Heart left ventricle (tissue), 16 donors: ENCODE measurements at regions of chr1 and their contacts with region 1.

Region 1: DNA sequence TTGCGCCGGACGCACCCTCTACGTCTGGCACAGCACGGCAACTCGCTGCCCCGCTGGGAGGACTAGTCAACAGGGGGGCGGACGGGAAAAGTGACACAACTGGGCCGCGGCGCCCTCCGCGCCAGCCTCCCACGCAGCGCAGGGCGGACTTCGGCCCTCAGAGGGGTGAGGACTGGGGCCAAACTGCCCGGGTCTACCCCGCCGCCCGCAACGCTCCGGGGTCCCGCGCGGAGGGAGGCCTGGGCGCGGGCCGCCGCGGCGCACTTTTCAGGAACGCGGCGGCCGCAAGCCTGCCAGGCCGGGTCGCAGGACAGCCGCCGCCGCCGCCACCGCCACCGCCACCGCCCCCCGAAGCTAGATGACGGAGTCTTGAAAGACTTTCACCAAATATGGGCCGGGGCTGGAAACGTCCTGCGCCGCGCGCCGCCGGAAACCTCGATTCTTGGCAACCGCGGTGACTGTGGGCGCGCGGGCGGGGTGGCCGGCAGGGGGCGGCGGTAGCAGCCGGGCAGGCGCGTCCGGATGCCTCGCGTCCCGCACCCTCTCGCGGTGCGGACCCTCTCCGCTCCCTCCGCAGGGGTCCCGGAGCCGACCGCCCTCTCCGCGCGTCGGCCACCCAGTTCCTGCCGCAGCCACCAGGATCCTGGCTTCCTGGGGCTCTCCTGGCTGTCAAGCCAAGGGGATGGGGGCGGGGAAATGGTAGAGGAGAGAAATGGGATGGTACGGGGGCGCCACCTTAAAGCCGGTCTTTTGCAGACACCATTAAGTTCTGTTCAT is 3.7 kb upstream of the CCN1 start:
- DNase-seq: peak; percentile 90 to 93 (median 91)
- ATAC-seq: peak; percentile 24 to 74 (median 54)
- H3K4me3 ChIP-seq: peak overlapping the region; percentile 47 to 97 (median 78)
- H3K27ac ChIP-seq: peak overlapping the region; percentile 93 to 100 (median 97)
- H3K4me1 ChIP-seq: peaks cover 0 to 41% (median 15%) of the 10 kb centered on the region in 12 donors
- H3K27me3 ChIP-seq: peaks cover 0 to 46% (median 0%) of the 10 kb centered on the region in 9 donors
- CTCF ChIP-seq: peak; percentile 58 to 89 (median 80)
- POLR2A ChIP-seq: peak in 1 of 2 donors; percentile 80

Region 2: GRCh38 chr1:85297855-85298629 is 278.8 kb before region 1 on chr1:
- intact Hi-C with region 1: loop called in 1 of 10 experiments (anchors 5 kb)
- DNase-seq: peak in 3 of 5 donors; percentile 38 to 82 (median 71)
- ATAC-seq: peak; percentile 69 to 94 (median 82)
- H3K4me3 ChIP-seq: peak overlapping the region in 5 of 12 donors; percentile 1 to 13 (median 11)
- H3K27ac ChIP-seq: peak overlapping the region in 11 of 12 donors; percentile 47 to 79 (median 67)
- H3K4me1 ChIP-seq: peaks cover 0 to 28% (median 11%) of the 10 kb centered on the region in 12 donors
- H3K27me3 ChIP-seq: no peaks in the 10 kb centered on the region
- CTCF ChIP-seq: no peak
- POLR2A ChIP-seq: no peak

Region 3: GRCh38 chr1:85313888-85314696 is 262.7 kb before region 1 on chr1:
- intact Hi-C with region 1: loop called (anchors 2 to 5 kb)
- DNase-seq: peak in 4 of 5 donors; percentile 44 to 51 (median 48)
- ATAC-seq: peak; percentile 91 to 94 (median 92)
- H3K4me3 ChIP-seq: no peak overlapping the region
- H3K27ac ChIP-seq: peak overlapping the region; percentile 72 to 96 (median 84)
- H3K4me1 ChIP-seq: peaks cover 0 to 47% (median 24%) of the 10 kb centered on the region in 12 donors
- H3K27me3 ChIP-seq: no peaks in the 10 kb centered on the region
- CTCF ChIP-seq: no peak
- POLR2A ChIP-seq: no peak

Region 4: GRCh38 chr1:85464497-85465098 is 112.2 kb before region 1 on chr1:
- intact Hi-C with region 1: loop called in 2 of 10 experiments (anchors 2 to 10 kb)
- DNase-seq: peak; percentile 76 to 83 (median 79)
- ATAC-seq: peak; percentile 45 to 87 (median 86)
- H3K4me3 ChIP-seq: peak overlapping the region; percentile 3 to 79 (median 70)
- H3K27ac ChIP-seq: peak overlapping the region; percentile 3 to 83 (median 72)
- H3K4me1 ChIP-seq: peaks cover 0 to 22% (median 11%) of the 10 kb centered on the region in 12 donors
- H3K27me3 ChIP-seq: peaks cover 0 to 30% (median 0%) of the 10 kb centered on the region in 9 donors
- CTCF ChIP-seq: no peak
- POLR2A ChIP-seq: peak in 1 of 2 donors; percentile 46

Region 5: GRCh38 chr1:85502625-85503083 is 74.2 kb before region 1 on chr1:
- intact Hi-C with region 1: loop called in 4 of 10 experiments (anchors 5 kb)
- DNase-seq: peak; percentile 38 to 56 (median 45)
- ATAC-seq: peak; percentile 42 to 90 (median 84)
- H3K4me3 ChIP-seq: no peak overlapping the region
- H3K27ac ChIP-seq: peak overlapping the region in 1 of 12 donors; percentile 43
- H3K4me1 ChIP-seq: peaks cover 0 to 8% (median 3%) of the 10 kb centered on the region in 12 donors
- H3K27me3 ChIP-seq: no peaks in the 10 kb centered on the region
- CTCF ChIP-seq: peak; percentile 39 to 71 (median 56)
- POLR2A ChIP-seq: no peak

Region 6: DNA sequence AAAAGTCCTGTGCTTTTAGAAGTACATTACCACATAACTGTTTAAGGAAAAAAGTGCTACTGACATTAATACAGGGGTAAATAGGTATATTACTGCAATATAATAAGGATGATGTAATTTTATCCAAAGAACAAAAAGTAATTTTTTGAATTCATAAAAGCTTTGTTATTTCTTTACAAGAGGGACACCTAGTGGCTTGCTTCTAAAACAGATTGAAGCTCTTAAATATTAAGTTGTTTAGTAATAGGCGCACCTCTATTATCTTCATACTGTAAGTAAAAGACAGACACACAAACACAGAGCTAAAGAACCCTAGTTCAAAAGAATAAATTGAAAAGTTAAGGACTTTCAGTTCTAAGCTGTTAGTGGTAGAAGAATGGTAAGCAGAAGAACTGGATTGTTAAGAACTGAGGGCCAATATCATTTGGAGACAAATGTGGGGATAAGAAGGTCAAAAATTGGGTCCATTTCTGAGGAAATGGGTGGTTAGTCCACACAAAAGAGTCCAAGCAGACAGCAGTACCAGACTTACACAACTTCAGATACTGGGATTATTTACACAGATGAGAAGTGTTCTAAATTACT is 116.0 kb after region 1 on chr1:
- intact Hi-C with region 1: loop called in 8 of 10 experiments (anchors 5 to 10 kb)
- DNase-seq: no peak
- ATAC-seq: peak in 2 of 4 donors; percentile 35 to 47
- H3K4me3 ChIP-seq: no peak overlapping the region
- H3K27ac ChIP-seq: peak overlapping the region in 3 of 12 donors; percentile 4 to 10 (median 9)
- H3K4me1 ChIP-seq: peaks cover 0 to 19% (median 7%) of the 10 kb centered on the region in 12 donors
- H3K27me3 ChIP-seq: no peaks in the 10 kb centered on the region
- CTCF ChIP-seq: peak; percentile 25 to 69 (median 52)
- POLR2A ChIP-seq: no peak

Region 7: DNA sequence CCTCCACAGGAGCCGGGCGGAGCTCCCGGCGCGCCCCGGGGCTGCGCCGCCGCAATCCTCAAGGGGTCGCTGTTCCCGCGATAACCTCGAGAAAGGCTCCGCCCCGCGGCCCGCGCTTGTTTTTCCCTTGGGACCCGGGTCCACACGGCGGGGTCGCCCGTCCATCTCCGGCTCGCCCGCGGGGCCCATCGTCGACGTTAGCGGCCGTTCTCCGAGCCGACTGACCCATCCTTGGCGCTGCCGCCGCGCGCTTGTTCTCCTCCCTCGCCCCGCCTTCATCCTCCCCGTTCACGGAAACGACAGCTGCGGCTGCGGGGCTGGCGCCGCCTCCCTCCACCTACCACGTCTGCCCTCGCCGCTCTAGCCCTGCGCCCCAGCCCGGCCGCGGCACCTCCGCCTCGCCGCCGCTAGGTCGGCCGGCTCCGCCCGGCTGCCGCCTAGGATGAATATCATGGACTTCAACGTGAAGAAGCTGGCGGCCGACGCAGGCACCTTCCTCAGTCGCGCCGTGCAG is 1127.7 kb after region 1 on chr1 and contains the start of gene SH3GLB1:
- intact Hi-C with region 1: loop called in 1 of 10 experiments (anchors 10 kb)
- DNase-seq: peak; percentile 88 to 94 (median 91)
- ATAC-seq: peak; percentile 83 to 96 (median 91)
- H3K4me3 ChIP-seq: peak within 1 kb of the TSS; percentile 63 to 96 (median 89)
- H3K27ac ChIP-seq: peak within 1 kb of the TSS; percentile 95 to 100 (median 99)
- H3K4me1 ChIP-seq: peaks cover 0 to 49% (median 36%) of the 10 kb centered on the region in 12 donors
- H3K27me3 ChIP-seq: no peaks in the 10 kb centered on the region
- CTCF ChIP-seq: peak; percentile 90 to 99 (median 97)
- POLR2A ChIP-seq: peak; percentile 14 to 64
- total RNA-seq, gene SH3GLB1: 53.6 to 203 (median 127) TPM